ENCODE measurements at regions of chr12 and their contacts with region 1.

Region 1: GRCh38 chr12:1634590-1635191 is 5.7 kb downstream of the WNT5B start:
- DNase-seq: peak; percentile 79
- CTCF ChIP-seq: peak; percentile 77

Region 2: DNA sequence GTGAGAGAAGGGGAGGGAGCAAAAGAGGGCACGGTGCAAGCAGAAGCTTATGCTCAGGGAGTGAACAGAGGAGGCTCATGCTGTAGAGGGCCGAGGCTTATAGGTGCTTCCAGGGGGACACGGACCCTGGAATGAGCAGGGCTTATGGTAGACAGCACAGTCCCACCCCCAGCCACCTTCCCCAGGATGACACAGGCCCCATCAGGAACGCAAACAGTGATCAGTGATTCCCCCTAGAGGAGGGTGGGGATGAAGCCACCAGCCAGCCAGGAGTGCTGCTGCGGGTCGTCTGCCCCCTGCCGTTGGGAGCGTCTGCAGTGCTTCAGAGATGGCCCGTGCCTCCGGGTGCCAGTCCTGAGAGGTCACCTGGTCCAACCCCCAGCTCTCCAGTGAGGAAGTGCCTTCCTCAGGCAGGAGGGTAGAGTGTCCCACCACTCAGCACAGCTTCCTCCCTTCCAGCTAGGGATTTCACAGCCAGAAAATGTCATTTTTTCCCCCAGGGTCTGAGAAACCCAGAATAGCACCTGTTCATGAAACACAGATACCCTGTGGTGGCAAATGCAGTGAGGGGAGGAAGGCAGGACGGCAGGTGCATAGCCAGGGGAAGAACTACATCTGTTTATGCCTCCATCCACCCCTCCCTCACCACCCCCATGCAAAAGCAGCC is 1481.5 kb before region 1 on chr12:
- in situ Hi-C with region 1: no loop called
- DNase-seq: peak; percentile 88
- CTCF ChIP-seq: peak; percentile 74

Region 3: DNA sequence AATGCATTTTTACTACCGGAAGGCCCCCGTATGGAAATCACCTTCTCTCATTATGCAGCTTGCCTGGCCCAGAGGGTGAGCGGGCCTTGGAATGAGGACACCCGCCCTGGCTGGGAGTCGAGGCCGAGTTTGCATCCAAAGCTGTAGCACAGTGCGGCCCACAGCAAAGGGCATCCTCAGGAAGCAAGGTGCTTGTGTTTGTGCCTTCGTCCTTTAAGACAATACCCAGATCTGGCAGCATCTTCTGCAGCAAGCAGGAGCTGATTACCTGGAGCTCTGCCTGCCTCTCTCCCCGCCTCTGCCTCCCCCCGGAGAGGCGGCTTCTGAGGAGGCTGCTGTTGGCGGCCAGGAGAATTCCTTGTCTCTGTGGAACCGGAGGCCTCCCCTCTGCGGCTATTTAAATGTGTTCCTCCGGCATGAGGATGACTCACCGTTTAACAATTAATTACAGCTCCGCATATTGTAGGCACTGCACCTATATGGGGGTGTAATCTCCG is 563.4 kb after region 1 on chr12:
- in situ Hi-C with region 1: no loop called
- DNase-seq: no peak
- CTCF ChIP-seq: no peak

Region 4: DNA sequence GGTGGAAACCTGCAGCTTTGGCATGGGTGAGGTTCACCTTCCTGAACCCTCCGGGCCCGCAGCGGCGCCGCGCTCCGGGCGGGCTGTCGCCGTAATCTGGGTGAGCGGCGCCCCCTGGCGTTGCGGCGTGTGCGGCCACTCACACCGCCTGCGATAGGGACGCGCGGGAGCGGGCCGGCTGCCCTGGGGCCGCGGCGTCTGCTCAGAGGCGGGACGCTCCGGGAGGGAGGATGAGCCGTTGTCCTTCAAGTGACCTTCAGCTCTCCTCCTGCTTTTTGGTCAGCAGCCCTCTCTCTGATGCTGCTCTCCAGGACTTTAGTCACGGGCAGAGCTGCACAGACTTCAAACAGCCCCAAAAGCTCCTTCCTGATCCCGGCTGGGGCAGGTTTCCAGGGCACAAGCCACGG is 948.4 kb after region 1 on chr12:
- in situ Hi-C with region 1: loop called (anchors 25 kb)
- DNase-seq: peak; percentile 88
- CTCF ChIP-seq: peak; percentile 88

Measured in GM13976 (cell line).